ENCODE measurements at regions of chr3 and their contacts with region 1.

Region 1: DNA sequence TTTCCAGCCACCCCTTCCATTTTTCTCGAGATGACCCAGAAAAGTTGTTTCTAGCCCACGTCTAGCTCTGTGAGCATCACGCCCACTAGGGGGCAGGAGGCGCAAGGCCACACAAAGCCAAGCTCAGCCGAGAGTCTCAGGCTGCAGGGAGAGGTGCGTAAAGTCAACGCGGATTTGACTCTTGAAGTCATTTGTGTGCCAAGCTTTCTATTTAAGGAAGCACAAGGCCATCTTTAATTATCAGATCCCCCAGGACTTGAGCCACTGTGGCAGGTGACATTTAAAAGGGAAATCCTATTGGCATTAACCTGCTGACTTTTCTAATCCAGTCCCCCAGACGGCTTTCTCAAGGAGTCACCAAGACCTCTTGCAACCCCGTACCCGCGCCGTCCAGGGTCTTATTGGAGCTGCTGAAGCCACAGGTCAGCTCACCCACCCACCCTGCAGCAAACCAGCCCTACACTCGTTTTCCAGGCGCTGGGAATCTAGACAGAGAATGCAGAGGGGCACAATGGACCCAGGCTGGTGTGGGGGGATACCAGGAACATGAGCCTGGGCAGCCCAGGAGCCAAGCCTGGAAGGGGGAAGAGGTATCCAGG is 62.1 kb downstream of the CAPN7 start:
- DNase-seq: peak; percentile 93
- H3K4me3 Mint-ChIP-seq: no peak overlapping the region
- H3K27ac Mint-ChIP-seq: no peak overlapping the region
- H3K4me1 Mint-ChIP-seq: peaks cover 61% of the 10 kb centered on the region
- H3K27me3 Mint-ChIP-seq: no peaks in the 10 kb centered on the region

Region 2: GRCh38 chr3:15205934-15206661 is 62.0 kb before region 1 on chr3 and contains the start of gene CAPN7:
- CTCF ChIA-PET with region 1: interaction called, 14 read pairs
- intact Hi-C with region 1: loop called (anchors 1 kb)
- DNase-seq: peak; percentile 92
- H3K4me3 Mint-ChIP-seq: peak within 1 kb of the TSS; percentile 82
- H3K27ac Mint-ChIP-seq: peak within 1 kb of the TSS; percentile 77
- H3K4me1 Mint-ChIP-seq: peaks cover 23% of the 10 kb centered on the region
- H3K27me3 Mint-ChIP-seq: no peaks in the 10 kb centered on the region
- total RNA-seq, gene CAPN7: 23.7 to 26.1 TPM

Region 3: DNA sequence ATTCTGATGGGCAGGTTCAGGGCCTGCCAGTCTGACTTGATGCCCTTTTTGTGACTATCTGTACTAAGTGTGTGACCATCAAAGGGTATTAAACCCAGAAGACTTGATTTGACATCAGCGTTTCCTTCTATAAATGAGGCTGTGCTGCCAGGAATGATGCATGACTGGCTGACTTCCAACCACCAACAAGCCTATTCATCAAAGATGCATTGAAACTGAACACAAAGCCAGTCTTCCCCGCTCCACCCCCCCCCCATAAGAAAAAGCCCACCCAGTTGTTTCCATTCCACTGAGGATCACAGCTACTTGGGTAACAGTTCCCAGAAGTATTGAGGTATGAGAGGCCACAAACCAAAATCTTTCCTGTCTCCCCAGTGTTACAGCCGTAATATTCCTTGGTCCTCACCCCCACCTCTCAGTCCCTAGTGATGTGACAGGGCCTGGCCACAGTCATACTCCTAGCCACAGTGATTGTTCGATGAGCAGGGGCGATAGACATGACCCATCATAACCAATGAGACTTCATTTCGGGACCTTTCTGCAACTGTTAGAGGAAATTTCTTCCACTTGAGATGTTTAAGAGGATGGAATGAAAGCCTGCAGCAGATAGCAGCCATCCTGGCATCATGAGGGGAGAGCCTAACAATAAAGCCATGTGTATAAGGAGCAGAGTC is 41.7 kb after region 1 on chr3:
- CTCF ChIA-PET with region 1: interaction called, 13 read pairs
- intact Hi-C with region 1: loop called (anchors 1 kb)
- DNase-seq: peak; percentile 76
- H3K4me3 Mint-ChIP-seq: no peak overlapping the region
- H3K27ac Mint-ChIP-seq: peak overlapping the region; percentile 95
- H3K4me1 Mint-ChIP-seq: peaks cover 66% of the 10 kb centered on the region
- H3K27me3 Mint-ChIP-seq: no peaks in the 10 kb centered on the region

Region 4: GRCh38 chr3:15361494-15362212 is 93.5 kb after region 1 on chr3:
- CTCF ChIA-PET with region 1: interaction called, 13 read pairs
- intact Hi-C with region 1: loop called (anchors 1 kb)
- DNase-seq: peak; percentile 86
- H3K4me3 Mint-ChIP-seq: no peak overlapping the region
- H3K27ac Mint-ChIP-seq: peak overlapping the region; percentile 83
- H3K4me1 Mint-ChIP-seq: peaks cover 42% of the 10 kb centered on the region
- H3K27me3 Mint-ChIP-seq: peaks cover 2% of the 10 kb centered on the region

Region 5: GRCh38 chr3:15399970-15400369 is 131.8 kb after region 1 on chr3:
- CTCF ChIA-PET with region 1: interaction called, 115 read pairs
- intact Hi-C with region 1: loop called (anchors 1 kb)
- DNase-seq: no peak
- H3K4me3 Mint-ChIP-seq: no peak overlapping the region
- H3K27ac Mint-ChIP-seq: no peak overlapping the region
- H3K4me1 Mint-ChIP-seq: peaks cover 9% of the 10 kb centered on the region
- H3K27me3 Mint-ChIP-seq: no peaks in the 10 kb centered on the region

Region 6: GRCh38 chr3:15708882-15709677 is 440.9 kb after region 1 on chr3:
- CTCF ChIA-PET with region 1: no interaction called
- intact Hi-C with region 1: no loop called
- DNase-seq: no peak
- H3K4me3 Mint-ChIP-seq: no peak overlapping the region
- H3K27ac Mint-ChIP-seq: no peak overlapping the region
- H3K4me1 Mint-ChIP-seq: no peaks in the 10 kb centered on the region
- H3K27me3 Mint-ChIP-seq: no peaks in the 10 kb centered on the region

Region 7: GRCh38 chr3:15797642-15798303 is 529.6 kb after region 1 on chr3 and contains the start of gene ANKRD28:
- CTCF ChIA-PET with region 1: no interaction called
- intact Hi-C with region 1: loop called (anchors 5 kb)
- DNase-seq: no peak
- H3K4me3 Mint-ChIP-seq: peak within 1 kb of the TSS; percentile 33
- H3K27ac Mint-ChIP-seq: peak within 1 kb of the TSS; percentile 48
- H3K4me1 Mint-ChIP-seq: peaks cover 70% of the 10 kb centered on the region
- H3K27me3 Mint-ChIP-seq: no peaks in the 10 kb centered on the region
- total RNA-seq, gene ANKRD28: 21.4 to 23.6 TPM

Measured in activated naive CD4-positive, alpha-beta T cell treated with anti-CD3 and anti-CD28 coated beads for 36 hours (primary cell).